ENCODE measurements at regions of chr6 and their contacts with region 1.

Region 1: DNA sequence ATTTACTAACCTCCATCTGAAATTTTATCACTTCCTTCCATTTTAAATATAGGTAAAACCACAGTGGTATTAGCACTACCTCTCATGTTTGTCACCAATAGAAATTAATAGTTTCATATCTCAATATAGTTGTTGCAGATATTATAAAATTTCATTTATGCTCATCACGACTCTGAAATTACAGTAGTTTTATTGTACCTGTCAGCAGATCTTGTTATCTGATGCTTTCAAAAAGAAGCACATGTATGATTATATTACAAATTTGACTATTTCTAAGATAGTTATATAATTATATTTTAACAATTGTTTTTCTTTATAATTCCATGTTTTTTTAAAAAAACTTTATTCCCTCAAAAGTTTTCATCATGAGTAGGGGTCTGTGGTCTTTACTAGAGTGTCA is 4.8 kb downstream of the TAAR5 start:
- DNase-seq: no peak
- H3K4me3 ChIP-seq: no peak overlapping the region
- H3K27ac ChIP-seq: no peak overlapping the region
- H3K4me1 ChIP-seq: no peaks in the 10 kb centered on the region
- H3K27me3 ChIP-seq: peaks cover 0 to 2% (median 0%) of the 10 kb centered on the region in 4 experiments; a peak in 1 of 7 replicates
- CTCF ChIP-seq: no peak
- EP300 ChIP-seq: no peak
- POLR2A ChIP-seq: no peak
- RAD21 ChIP-seq: no peak

Region 2: GRCh38 chr6:132570221-132570777 is 14.4 kb before region 1 on chr6 and contains the start of gene TAAR6:
- CTCF ChIA-PET with region 1: no interaction called
- POLR2A ChIA-PET with region 1: no interaction called
- DNase-seq: no peak
- H3K4me3 ChIP-seq: no peak within 1 kb of the TSS
- H3K27ac ChIP-seq: no peak within 1 kb of the TSS
- H3K4me1 ChIP-seq: peaks cover 0 to 6% (median 1%) of the 10 kb centered on the region in 4 experiments; a peak in 5 of 7 replicates
- H3K27me3 ChIP-seq: no peaks in the 10 kb centered on the region
- CTCF ChIP-seq: no peak
- EP300 ChIP-seq: no peak
- POLR2A ChIP-seq: no peak
- RAD21 ChIP-seq: no peak
- total RNA-seq, gene TAAR6: not detected in 2 replicates

Region 3: GRCh38 chr6:132598473-132598872 is 13.8 kb after region 1 on chr6:
- CTCF ChIA-PET with region 1: interaction called, 10 read pairs
- POLR2A ChIA-PET with region 1: no interaction called
- DNase-seq: no peak
- H3K4me3 ChIP-seq: no peak overlapping the region
- H3K27ac ChIP-seq: no peak overlapping the region
- H3K4me1 ChIP-seq: no peaks in the 10 kb centered on the region
- H3K27me3 ChIP-seq: no peaks in the 10 kb centered on the region
- CTCF ChIP-seq: peak; percentile 21 to 72 (median 49)
- EP300 ChIP-seq: no peak
- POLR2A ChIP-seq: no peak
- RAD21 ChIP-seq: peak; percentile 32 to 35